ENCODE measurements at regions of chr10 and their contacts with region 1.

Region 1: DNA sequence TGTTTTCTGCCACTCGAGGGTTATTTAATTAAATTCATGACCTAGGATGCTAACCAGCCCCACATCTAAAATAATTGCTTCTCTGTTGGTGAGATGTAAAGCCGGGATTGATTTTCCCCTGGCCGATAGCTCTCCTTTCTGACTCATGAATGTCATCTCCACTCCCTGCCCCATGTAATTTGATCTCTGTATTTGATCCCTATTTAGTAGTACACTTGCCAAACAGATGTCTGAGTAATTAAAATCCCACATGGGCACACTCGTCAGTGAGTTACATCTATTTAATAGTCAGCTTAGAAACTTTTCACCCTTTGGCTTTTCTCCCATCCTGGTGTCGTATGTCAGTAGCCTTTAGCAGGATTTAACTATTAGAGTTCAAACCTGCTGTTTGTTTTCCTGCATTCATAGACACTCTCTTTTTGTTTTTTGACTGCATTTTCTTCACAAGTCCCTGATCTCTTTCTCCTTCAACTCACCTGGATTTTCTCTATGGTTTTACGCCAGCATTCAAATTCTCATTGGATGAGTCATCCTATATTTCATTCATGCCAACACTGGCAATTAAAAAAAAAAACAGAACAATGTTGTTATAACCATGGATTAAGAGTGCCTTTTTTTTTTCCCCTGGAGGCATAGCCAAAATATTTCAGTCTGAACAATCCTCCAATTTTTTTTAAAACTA is 82.7 kb downstream of the SPAG6 start:
- DNase-seq: no peak
- H3K4me3 ChIP-seq: no peak overlapping the region
- H3K27ac ChIP-seq: peak overlapping the region in 1 of 4 donors; percentile 32
- H3K4me1 ChIP-seq: peaks cover 0 to 33% (median 9%) of the 10 kb centered on the region in 3 donors
- H3K27me3 ChIP-seq: peaks cover 0 to 54% (median 0%) of the 10 kb centered on the region in 4 donors
- CTCF ChIP-seq: no peak
- POLR2A ChIP-seq: no peak

Region 2: GRCh38 chr10:21989453-21990154 is 438.4 kb before region 1 on chr10:
- intact Hi-C with region 1: loop called (anchors 10 kb)
- DNase-seq: no peak
- H3K4me3 ChIP-seq: no peak overlapping the region
- H3K27ac ChIP-seq: peak overlapping the region in 1 of 4 donors; percentile 0
- H3K4me1 ChIP-seq: peaks cover 0 to 10% (median 0%) of the 10 kb centered on the region in 3 donors
- H3K27me3 ChIP-seq: no peaks in the 10 kb centered on the region
- CTCF ChIP-seq: peak in 4 of 6 experiments; percentile 16 to 48 (median 29)
- POLR2A ChIP-seq: no peak